GM12878 (cell line): ENCODE measurements at regions of chr17 and their contacts with region 1.

Region 1: DNA sequence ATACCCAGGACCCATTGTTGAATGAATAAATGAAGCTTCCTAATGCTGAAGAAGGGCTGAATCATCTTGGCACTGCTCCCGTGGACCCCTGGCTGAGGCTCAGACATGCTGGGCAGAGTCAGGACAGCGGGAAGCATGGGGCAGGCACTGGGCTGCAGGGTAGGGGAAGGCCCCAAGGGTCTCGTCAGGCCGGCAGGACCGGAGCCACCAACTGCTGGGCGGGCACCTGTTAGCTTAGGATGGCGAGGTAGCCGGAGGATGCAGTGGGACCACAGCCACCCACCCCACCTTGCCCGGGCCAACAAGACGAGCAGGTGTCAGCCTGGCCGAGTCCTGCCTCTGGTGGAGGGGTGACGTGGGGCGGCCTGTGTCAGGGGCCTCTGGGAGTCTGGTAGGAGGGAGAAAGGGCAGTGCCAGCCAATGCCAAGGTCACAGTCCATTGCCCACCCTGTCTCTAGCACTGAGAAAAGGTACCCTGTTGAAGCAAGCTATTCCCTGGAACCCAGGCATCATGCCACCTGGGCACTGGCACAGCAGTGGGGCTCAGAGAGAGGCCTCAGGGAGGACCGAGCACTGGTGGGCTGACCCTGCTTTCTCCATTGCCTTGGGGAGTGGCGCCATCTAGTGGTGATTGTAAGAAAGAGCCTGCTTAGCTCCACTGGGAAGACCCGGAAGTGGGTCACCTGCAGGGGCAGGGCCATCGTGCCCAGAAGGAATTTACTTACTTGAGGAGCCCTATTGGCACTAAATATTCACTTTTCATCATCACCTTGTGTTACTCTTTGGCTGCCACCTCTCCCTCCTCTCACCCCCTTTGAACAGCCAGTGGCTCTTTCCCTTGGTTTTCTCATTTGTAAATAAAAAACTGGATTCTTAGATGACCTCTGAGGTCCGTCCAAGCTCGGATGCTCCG is 3.0 kb upstream of the DLX3 start:
- DNase-seq: peak; percentile 34
- ATAC-seq: peak; percentile 96
- H3K4me3 ChIP-seq: no peak overlapping the region
- H3K27ac ChIP-seq: no peak overlapping the region
- H3K4me1 ChIP-seq: 0 out of 2 replicates have a peak, but pooled peaks cover 3% of the 10 kb centered on the region
- H3K27me3 ChIP-seq: peaks cover 10 to 28% of the 10 kb centered on the region in 2 experiments
- CTCF ChIP-seq: peak; percentile 89 to 95 (median 91)
- EP300 ChIP-seq: no peak
- POLR2A ChIP-seq: no peak
- RAD21 ChIP-seq: peak; percentile 88

Region 2: GRCh38 chr17:49575579-49576087 is 422.4 kb before region 1 on chr17 and contains the start of gene NXPH3:
- CTCF ChIA-PET with region 1: interaction called, 3 read pairs
- POLR2A ChIA-PET with region 1: no interaction called
- RAD21 ChIA-PET with region 1: interaction called, 9 read pairs
- SMC1A ChIA-PET with region 1: no interaction called
- in situ Hi-C with region 1: loop called (anchors 5 kb)
- intact Hi-C with region 1: no loop called
- DNase-seq: no peak
- ATAC-seq: peak; percentile 72
- H3K4me3 ChIP-seq: peak within 1 kb of the TSS; percentile 72
- H3K27ac ChIP-seq: no peak within 1 kb of the TSS
- H3K4me1 ChIP-seq: peaks cover 7% of the 10 kb centered on the region
- H3K27me3 ChIP-seq: peaks cover 2 to 8% of the 10 kb centered on the region in 2 experiments; a peak in 3 of 4 replicates
- CTCF ChIP-seq: peak; percentile 17 to 56 (median 45); a peak in 3 of 6 replicates
- EP300 ChIP-seq: no peak
- POLR2A ChIP-seq: no peak
- RAD21 ChIP-seq: peak; percentile 43
- polyA plus RNA-seq, gene NXPH3: not detected

Region 3: GRCh38 chr17:49880291-49881053 is 117.6 kb before region 1 on chr17:
- CTCF ChIA-PET with region 1: interaction called, 105 read pairs
- POLR2A ChIA-PET with region 1: no interaction called
- RAD21 ChIA-PET with region 1: interaction called, 16 read pairs
- SMC1A ChIA-PET with region 1: interaction called, 9 read pairs
- in situ Hi-C with region 1: no loop called
- intact Hi-C with region 1: loop called (anchors 5 kb)
- DNase-seq: no peak
- ATAC-seq: peak; percentile 99
- H3K4me3 ChIP-seq: no peak overlapping the region
- H3K27ac ChIP-seq: no peak overlapping the region
- H3K4me1 ChIP-seq: no peaks in the 10 kb centered on the region
- H3K27me3 ChIP-seq: peaks cover 0 to 5% of the 10 kb centered on the region in 2 experiments; a peak in 2 of 4 replicates
- CTCF ChIP-seq: peak; percentile 88 to 99 (median 91)
- EP300 ChIP-seq: no peak
- POLR2A ChIP-seq: no peak
- RAD21 ChIP-seq: peak; percentile 60

Region 4: DNA sequence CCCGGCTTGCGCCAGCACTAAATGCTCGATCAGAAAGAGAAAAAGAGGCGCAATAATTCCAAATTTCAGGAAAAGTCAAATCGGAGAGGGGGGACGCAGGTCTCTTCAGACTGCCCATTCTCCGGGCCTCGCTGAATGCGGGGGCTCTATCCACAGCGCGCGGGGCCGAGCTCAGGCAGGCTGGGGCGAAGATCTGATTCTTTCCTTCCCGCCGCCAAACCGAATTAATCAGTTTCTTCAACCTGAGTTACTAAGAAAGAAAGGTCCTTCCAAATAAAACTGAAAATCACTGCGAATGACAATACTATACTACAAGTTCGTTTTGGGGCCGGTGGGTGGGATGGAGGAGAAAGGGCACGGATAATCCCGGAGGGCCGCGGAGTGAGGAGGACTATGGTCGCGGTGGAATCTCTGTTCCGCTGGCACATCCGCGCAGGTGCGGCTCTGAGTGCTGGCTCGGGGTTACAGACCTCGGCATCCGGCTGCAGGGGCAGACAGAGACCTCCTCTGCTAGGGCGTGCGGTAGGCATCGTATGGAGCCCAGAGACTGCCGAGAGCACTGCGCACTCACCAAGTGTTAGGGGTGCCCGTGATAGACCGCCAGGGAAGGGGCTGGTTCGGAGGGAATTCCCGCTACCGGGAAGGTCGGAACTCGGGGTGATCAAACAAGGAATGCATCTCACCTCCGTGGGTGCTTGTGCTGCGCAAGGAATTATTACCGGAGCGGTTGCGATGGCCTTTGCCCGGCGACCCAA is 33.1 kb before region 1 on chr17:
- CTCF ChIA-PET with region 1: interaction called, 13 read pairs
- POLR2A ChIA-PET with region 1: no interaction called
- RAD21 ChIA-PET with region 1: interaction called, 3 read pairs
- SMC1A ChIA-PET with region 1: no interaction called
- in situ Hi-C with region 1: no loop called
- intact Hi-C with region 1: no loop called
- DNase-seq: no peak
- ATAC-seq: no peak
- H3K4me3 ChIP-seq: no peak overlapping the region
- H3K27ac ChIP-seq: no peak overlapping the region
- H3K4me1 ChIP-seq: no peaks in the 10 kb centered on the region; the same call in 1 of the 2 replicates
- H3K27me3 ChIP-seq: peaks cover 11 to 19% of the 10 kb centered on the region in 2 experiments
- CTCF ChIP-seq: no peak
- EP300 ChIP-seq: no peak
- POLR2A ChIP-seq: no peak
- RAD21 ChIP-seq: no peak

Region 5: DNA sequence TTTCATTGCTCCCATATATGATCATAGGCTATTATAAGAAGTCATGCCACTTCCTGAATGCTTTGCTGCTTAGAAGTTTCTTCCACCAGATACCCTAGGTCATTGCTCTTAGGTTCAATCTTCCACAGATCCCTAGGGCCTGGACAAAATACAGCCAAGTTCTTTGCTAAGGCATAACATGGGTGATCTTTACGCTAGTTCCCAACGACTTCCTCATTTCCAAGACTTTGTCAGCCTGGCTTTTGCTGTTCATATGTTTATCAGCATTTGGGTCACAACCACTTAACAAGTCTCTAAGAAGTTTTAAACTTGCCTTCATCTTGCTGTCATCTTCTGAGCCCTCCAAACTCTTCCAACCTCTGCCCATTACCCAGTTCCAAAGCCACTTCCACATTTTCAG is 17.1 kb after region 1 on chr17:
- CTCF ChIA-PET with region 1: interaction called, 10 read pairs
- POLR2A ChIA-PET with region 1: no interaction called
- RAD21 ChIA-PET with region 1: interaction called, 3 read pairs
- SMC1A ChIA-PET with region 1: no interaction called
- in situ Hi-C with region 1: no loop called
- intact Hi-C with region 1: no loop called
- DNase-seq: no peak
- ATAC-seq: no peak
- H3K4me3 ChIP-seq: no peak overlapping the region
- H3K27ac ChIP-seq: no peak overlapping the region
- H3K4me1 ChIP-seq: no peaks in the 10 kb centered on the region
- H3K27me3 ChIP-seq: no peaks in the 10 kb centered on the region
- CTCF ChIP-seq: no peak
- EP300 ChIP-seq: no peak
- POLR2A ChIP-seq: no peak
- RAD21 ChIP-seq: no peak

Region 6: GRCh38 chr17:50087246-50087911 is 89.3 kb after region 1 on chr17:
- CTCF ChIA-PET with region 1: interaction called, 18 read pairs
- POLR2A ChIA-PET with region 1: no interaction called
- RAD21 ChIA-PET with region 1: interaction called, 19 read pairs
- SMC1A ChIA-PET with region 1: interaction called, 13 read pairs
- in situ Hi-C with region 1: no loop called
- intact Hi-C with region 1: no loop called
- DNase-seq: no peak
- ATAC-seq: peak; percentile 99
- H3K4me3 ChIP-seq: no peak overlapping the region
- H3K27ac ChIP-seq: no peak overlapping the region
- H3K4me1 ChIP-seq: no peaks in the 10 kb centered on the region
- H3K27me3 ChIP-seq: no peaks in the 10 kb centered on the region
- CTCF ChIP-seq: peak; percentile 93 to 99 (median 98)
- EP300 ChIP-seq: no peak
- POLR2A ChIP-seq: no peak
- RAD21 ChIP-seq: peak; percentile 94

Region 7: DNA sequence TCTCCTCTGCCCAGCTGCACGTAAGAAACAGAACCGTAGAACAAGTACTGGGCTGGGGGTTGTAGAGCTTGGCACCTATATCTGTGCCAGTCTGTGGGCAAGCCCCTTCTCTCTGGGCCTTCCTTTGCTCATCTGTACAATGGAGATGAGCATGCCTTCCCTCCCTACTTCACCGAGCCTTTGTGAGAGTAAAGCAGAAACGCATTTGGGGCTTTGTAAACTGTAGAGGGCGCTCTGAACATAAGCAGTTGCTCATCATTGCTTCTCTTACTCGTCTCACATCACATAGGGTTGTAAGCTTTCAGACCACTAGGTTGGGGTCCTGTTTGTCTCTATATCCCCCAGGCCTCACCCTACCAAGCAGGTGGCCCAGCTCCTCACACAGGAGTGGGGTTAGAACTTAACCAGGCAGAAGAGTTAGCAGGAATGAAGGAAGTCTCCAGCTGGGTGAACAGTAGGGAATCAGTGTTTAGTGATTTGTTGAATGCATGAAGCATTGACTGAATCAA is 116.9 kb after region 1 on chr17:
- CTCF ChIA-PET with region 1: no interaction called
- POLR2A ChIA-PET with region 1: no interaction called
- RAD21 ChIA-PET with region 1: no interaction called
- SMC1A ChIA-PET with region 1: no interaction called
- in situ Hi-C with region 1: no loop called
- intact Hi-C with region 1: no loop called
- DNase-seq: no peak
- ATAC-seq: peak; percentile 74
- H3K4me3 ChIP-seq: no peak overlapping the region
- H3K27ac ChIP-seq: no peak overlapping the region
- H3K4me1 ChIP-seq: no peaks in the 10 kb centered on the region
- H3K27me3 ChIP-seq: peaks cover 6% of the 10 kb centered on the region in 2 experiments; a peak in 3 of 4 replicates
- CTCF ChIP-seq: peak; percentile 69 to 77 (median 72)
- EP300 ChIP-seq: no peak
- POLR2A ChIP-seq: no peak
- RAD21 ChIP-seq: peak; percentile 64